PC-9 (cell line): ENCODE measurements at regions of chr7 and their contacts with region 1.

Region 1: DNA sequence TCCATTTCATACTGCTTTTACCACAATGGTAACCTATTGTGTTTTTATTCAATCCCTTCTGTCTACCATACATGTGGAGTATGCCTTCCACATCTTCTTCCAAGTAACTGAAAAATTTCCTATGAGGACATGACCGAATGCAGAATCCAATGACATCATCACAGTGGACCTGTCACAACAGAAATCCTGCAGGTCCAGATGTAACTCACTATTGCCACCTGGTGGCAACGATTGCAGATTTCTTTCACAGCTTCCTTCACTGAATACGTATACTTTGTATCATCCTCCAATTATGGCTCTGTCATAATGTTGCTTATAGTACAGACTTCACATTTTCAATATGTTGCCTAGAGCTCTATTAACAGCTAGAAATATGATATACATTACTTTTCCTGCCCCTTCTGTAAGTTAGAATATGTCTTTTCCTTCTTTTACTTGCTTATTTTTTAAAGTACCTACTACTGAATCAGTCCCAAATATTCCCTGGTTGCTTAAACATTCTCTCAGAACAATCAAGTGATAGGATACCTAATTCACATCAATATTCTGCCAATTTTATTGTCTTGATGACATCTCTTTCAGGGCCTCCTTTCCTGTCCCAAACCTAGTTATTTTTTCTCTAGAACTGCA is 45.4 kb downstream of the SLC13A1 start:
- DNase-seq: peak; percentile 65 to 73
- H3K4me3 ChIP-seq: no peak overlapping the region
- H3K27ac ChIP-seq: no peak overlapping the region
- H3K4me1 ChIP-seq: no peaks in the 10 kb centered on the region
- H3K27me3 ChIP-seq: no peaks in the 10 kb centered on the region
- CTCF ChIP-seq: peak; percentile 84

Region 2: GRCh38 chr7:122014697-122015096 is 1139.6 kb before region 1 on chr7:
- CTCF ChIA-PET with region 1: no interaction called
- POLR2A ChIA-PET with region 1: no interaction called
- intact Hi-C with region 1: loop called (anchors 10 kb)
- DNase-seq: no peak
- H3K4me3 ChIP-seq: no peak overlapping the region
- H3K27ac ChIP-seq: no peak overlapping the region
- H3K4me1 ChIP-seq: no peaks in the 10 kb centered on the region
- H3K27me3 ChIP-seq: no peaks in the 10 kb centered on the region
- CTCF ChIP-seq: peak; percentile 61

Region 3: DNA sequence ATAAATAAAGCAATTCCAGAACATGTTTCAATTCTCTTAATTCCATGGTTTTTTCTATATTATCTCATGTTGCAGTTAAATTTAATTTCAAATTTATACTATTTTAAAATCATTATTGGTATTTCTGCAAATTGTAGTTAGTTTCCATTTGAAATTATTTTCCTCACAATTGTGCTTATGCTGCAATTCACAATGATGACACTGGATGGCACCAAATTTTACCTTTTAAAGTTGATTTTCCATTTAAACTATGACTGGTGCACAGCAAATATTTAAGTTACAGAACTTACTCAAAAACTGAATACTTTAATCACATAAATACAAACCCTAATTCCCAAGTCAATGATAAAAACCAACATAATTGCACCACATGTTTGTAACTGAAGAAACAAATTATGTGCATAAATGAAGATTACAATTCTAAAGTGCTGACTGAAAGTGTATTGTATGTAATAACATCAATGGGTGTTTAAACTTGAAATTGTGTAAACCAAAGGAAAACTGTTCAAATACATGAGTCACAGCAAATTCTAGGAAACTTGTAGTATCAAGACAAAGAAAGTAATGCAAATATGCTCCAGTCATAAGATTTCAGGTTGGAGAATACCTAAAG is 935.0 kb before region 1 on chr7:
- CTCF ChIA-PET with region 1: no interaction called
- POLR2A ChIA-PET with region 1: no interaction called
- intact Hi-C with region 1: loop called (anchors 2 kb)
- DNase-seq: no peak
- H3K4me3 ChIP-seq: no peak overlapping the region
- H3K27ac ChIP-seq: no peak overlapping the region
- H3K4me1 ChIP-seq: no peaks in the 10 kb centered on the region
- H3K27me3 ChIP-seq: no peaks in the 10 kb centered on the region
- CTCF ChIP-seq: peak; percentile 85

Region 4: GRCh38 chr7:122550545-122550944 is 603.8 kb before region 1 on chr7:
- CTCF ChIA-PET with region 1: no interaction called
- POLR2A ChIA-PET with region 1: no interaction called
- intact Hi-C with region 1: loop called (anchors 10 kb)
- DNase-seq: no peak
- H3K4me3 ChIP-seq: no peak overlapping the region
- H3K27ac ChIP-seq: no peak overlapping the region
- H3K4me1 ChIP-seq: no peaks in the 10 kb centered on the region
- H3K27me3 ChIP-seq: no peaks in the 10 kb centered on the region
- CTCF ChIP-seq: 0 out of 2 replicates have a peak, but pooled peaks have one; percentile 31

Region 5: GRCh38 chr7:122803323-122803722 is 351.0 kb before region 1 on chr7:
- CTCF ChIA-PET with region 1: interaction called, 3 read pairs
- POLR2A ChIA-PET with region 1: interaction called, 3 read pairs
- intact Hi-C with region 1: loop called (anchors 1 kb)
- DNase-seq: peak in 1 of 2 experiments; percentile 21
- H3K4me3 ChIP-seq: no peak overlapping the region
- H3K27ac ChIP-seq: no peak overlapping the region
- H3K4me1 ChIP-seq: no peaks in the 10 kb centered on the region
- H3K27me3 ChIP-seq: no peaks in the 10 kb centered on the region
- CTCF ChIP-seq: peak; percentile 62

Region 6: DNA sequence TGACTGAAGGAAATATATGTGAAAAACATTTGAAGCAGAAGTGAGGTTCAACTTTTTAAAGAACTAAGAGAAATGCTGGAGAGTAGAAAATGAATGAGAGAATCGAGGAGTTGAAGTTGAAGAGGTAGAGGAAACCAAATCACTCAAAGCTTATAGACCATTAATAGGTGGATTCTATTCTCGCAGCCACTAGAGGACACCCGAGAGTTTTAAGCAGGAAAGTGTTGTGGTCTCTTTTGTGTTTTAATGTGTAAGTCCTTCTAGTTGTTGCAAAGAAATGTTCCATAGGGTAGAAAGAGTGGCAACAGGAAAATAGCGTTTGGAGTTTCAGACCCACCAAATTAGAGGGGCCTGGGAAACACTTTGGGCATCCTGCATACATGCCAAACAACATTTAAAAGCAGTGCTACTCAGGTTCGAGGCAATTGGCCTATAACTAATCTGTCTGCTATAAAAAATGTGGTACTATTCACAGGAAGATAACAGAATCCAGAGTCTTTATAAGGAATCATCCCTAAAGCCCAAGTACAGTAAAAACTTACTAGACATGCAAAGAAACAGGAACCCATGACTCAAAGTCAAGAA is 83.6 kb before region 1 on chr7:
- CTCF ChIA-PET with region 1: no interaction called
- POLR2A ChIA-PET with region 1: no interaction called
- intact Hi-C with region 1: loop called (anchors 5 kb)
- DNase-seq: peak in 1 of 2 experiments; percentile 12
- H3K4me3 ChIP-seq: no peak overlapping the region
- H3K27ac ChIP-seq: no peak overlapping the region
- H3K4me1 ChIP-seq: no peaks in the 10 kb centered on the region
- H3K27me3 ChIP-seq: no peaks in the 10 kb centered on the region
- CTCF ChIP-seq: peak; percentile 66

Region 7: DNA sequence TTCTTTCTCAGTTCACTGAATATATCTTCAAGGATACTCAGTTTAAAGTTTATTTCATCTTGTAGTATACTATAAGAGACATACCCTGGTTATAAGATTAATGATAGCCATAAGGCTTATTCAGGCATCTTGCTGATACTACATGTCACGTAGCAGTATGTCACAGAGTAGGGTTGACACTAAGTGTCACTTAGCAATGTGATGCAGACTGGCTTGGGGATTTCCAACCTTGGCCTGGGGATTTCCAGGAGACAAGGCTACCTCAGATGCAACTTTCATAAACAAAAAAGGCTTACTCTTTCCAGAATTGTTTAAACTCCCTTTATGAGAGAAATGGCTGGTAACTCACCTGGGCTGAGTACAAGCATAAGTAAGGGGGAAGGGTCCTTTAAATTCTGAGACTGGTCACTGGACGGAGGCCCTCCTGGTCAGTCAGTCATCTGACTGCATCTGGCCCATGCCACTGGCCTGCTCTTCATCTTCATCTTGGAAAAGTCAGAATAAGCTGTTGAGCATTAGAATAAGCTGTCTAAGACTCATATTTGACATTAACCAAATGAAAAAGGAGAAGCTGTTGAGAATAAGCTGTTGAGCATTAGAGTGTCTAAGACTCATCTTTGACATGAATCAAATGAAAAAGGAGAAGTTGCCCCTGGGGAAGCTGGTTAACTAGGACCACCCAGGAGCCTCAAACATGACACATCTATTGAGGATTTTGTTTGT is 35.9 kb after region 1 on chr7:
- CTCF ChIA-PET with region 1: no interaction called
- POLR2A ChIA-PET with region 1: no interaction called
- intact Hi-C with region 1: no loop called
- DNase-seq: no peak
- H3K4me3 ChIP-seq: no peak overlapping the region
- H3K27ac ChIP-seq: no peak overlapping the region
- H3K4me1 ChIP-seq: peaks cover 13% of the 10 kb centered on the region
- H3K27me3 ChIP-seq: no peaks in the 10 kb centered on the region
- CTCF ChIP-seq: no peak

Region 8: DNA sequence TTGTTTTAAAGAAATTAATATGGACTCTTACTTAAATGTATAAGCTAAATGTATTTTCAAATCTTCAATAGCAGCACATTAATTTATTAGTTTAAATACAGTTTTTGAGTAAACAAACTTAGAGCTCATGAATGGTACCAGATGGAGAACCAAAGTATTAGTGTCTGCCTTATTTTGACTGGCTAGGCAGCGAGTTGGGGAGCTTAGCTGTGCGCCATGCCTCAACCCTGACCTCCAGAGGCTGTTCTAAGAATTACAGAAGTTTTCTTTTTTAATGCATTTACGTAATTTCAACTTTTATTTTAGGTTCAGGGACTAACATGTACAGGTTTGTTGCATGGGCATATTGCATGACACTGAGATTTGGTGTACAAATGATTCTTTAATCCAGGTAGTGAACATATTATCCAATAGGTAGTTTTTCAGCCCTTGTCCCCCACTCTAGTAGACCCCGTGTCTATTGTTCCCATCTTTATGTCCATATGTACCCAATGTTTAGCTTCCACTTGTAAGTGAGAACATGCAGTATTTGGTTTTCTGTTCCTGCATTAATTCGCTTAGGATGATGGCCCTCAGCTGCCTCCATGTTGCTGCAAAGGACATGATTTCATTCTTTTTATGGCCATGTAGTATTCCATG is 213.3 kb after region 1 on chr7:
- CTCF ChIA-PET with region 1: no interaction called
- POLR2A ChIA-PET with region 1: no interaction called
- intact Hi-C with region 1: loop called (anchors 2 kb)
- DNase-seq: peak in 1 of 2 experiments; percentile 15
- H3K4me3 ChIP-seq: no peak overlapping the region
- H3K27ac ChIP-seq: no peak overlapping the region
- H3K4me1 ChIP-seq: no peaks in the 10 kb centered on the region
- H3K27me3 ChIP-seq: no peaks in the 10 kb centered on the region
- CTCF ChIP-seq: peak; percentile 81